Common myeloid progenitor, CD34-positive (primary cell): ENCODE measurements at regions of chr12 and their contacts with region 1.

Region 1: GRCh38 chr12:56189176-56189917 is at the start of gene SMARCC2:
- DNase-seq: peak; percentile 86 to 89 (median 87)
- H3K4me3 ChIP-seq: peak within 1 kb of the TSS; percentile 65 to 95 (median 88)
- H3K27ac ChIP-seq: peak within 1 kb of the TSS; percentile 66 to 87
- H3K4me1 ChIP-seq: peaks cover 8 to 36% (median 30%) of the 10 kb centered on the region in 4 experiments
- H3K27me3 ChIP-seq: no peaks in the 10 kb centered on the region

Region 2: DNA sequence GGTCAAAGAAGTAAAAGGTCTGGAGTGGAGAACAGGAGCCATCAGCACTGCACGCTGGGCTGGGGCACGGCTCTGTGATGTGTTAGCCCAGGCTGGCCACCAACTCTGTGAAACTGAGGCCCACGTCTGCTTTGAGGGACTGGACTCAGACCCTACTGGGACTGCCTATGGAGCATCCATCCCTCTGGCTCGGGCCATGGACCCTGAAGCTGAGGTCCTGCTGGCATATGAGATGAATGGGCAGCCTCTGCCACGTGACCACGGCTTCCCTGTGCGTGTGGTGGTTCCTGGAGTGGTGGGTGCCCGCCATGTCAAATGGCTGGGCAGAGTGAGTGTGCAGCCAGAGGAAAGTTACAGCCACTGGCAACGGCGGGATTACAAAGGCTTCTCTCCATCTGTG is 185.1 kb before region 1 on chr12:
- CTCF ChIA-PET with region 1: no interaction called
- POLR2A ChIA-PET with region 1: no interaction called
- DNase-seq: no peak
- H3K4me3 ChIP-seq: no peak overlapping the region
- H3K27ac ChIP-seq: no peak overlapping the region
- H3K4me1 ChIP-seq: peaks cover 5 to 27% (median 15%) of the 10 kb centered on the region in 4 experiments
- H3K27me3 ChIP-seq: no peaks in the 10 kb centered on the region

Region 3: GRCh38 chr12:56117778-56118687 is 71.3 kb before region 1 on chr12 and contains the start of gene ZC3H10:
- CTCF ChIA-PET with region 1: interaction called, 198 read pairs
- POLR2A ChIA-PET with region 1: interaction called, 13 read pairs
- DNase-seq: peak; percentile 99 to 100 (median 100)
- H3K4me3 ChIP-seq: peak within 1 kb of the TSS; percentile 74 to 100 (median 91)
- H3K27ac ChIP-seq: peak within 1 kb of the TSS; percentile 86 to 94
- H3K4me1 ChIP-seq: peaks cover 13 to 34% (median 23%) of the 10 kb centered on the region in 4 experiments
- H3K27me3 ChIP-seq: no peaks in the 10 kb centered on the region

Region 4: DNA sequence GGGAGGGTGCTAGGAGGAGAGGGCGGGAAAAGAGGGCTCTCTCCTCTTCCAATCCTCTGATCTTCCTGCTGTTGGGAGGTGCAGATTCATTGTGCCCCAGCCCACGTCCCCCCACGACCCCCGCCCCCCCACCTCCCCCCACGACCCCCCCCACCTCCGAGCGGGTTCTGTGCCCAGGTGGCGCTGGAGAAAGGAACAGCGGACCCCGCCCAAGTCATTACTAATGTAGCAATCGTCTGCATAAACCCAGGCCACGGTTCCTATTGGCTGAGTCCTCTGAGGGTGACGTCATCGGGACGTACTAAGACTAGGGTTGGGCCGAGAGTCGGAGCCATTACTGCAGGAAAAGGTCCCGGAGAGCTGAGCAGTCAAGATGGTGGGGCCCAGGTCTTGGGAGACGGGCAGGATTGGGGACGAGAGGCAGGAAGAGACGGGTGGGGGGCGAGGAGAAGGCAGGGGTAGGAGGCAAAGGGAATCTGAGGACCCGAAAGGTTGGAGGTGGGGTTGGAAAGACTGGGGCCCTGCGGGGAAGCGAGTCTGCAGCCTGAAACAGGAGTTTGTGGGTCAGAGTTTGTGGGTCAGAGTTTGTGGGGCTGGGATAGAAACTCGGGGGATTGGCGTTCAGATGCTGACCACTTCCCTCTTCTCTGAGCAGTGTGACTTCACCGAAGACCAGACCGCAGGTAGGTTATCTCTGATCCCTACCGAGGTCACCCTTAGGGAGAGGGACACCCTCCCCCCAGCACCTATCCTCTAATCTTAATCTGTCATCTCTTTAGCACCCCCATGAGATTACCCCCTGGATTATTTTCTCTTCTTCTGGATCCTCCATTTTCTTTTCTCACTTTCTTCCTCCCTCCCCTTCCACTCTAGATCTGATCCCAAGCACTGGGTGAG is 31.1 kb before region 1 on chr12 and contains the start of gene MYL6:
- CTCF ChIA-PET with region 1: interaction called, 13 read pairs
- POLR2A ChIA-PET with region 1: interaction called, 4 read pairs
- DNase-seq: peak; percentile 97 to 98 (median 98)
- H3K4me3 ChIP-seq: peak within 1 kb of the TSS; percentile 71 to 99 (median 97)
- H3K27ac ChIP-seq: peak within 1 kb of the TSS; percentile 94 to 98
- H3K4me1 ChIP-seq: peaks cover 10 to 42% (median 37%) of the 10 kb centered on the region in 4 experiments
- H3K27me3 ChIP-seq: no peaks in the 10 kb centered on the region

Region 5: GRCh38 chr12:56178347-56178746 is 11.0 kb before region 1 on chr12:
- CTCF ChIA-PET with region 1: interaction called, 16 read pairs
- POLR2A ChIA-PET with region 1: interaction called, 3 read pairs
- DNase-seq: no peak
- H3K4me3 ChIP-seq: no peak overlapping the region
- H3K27ac ChIP-seq: no peak overlapping the region
- H3K4me1 ChIP-seq: no peaks in the 10 kb centered on the region
- H3K27me3 ChIP-seq: no peaks in the 10 kb centered on the region

Region 6: GRCh38 chr12:56224102-56224701 is 34.9 kb after region 1 on chr12 and contains the start of gene NABP2:
- CTCF ChIA-PET with region 1: interaction called, 50 read pairs
- POLR2A ChIA-PET with region 1: interaction called, 6 read pairs
- DNase-seq: peak; percentile 96
- H3K4me3 ChIP-seq: peak within 1 kb of the TSS; percentile 37 to 89 (median 83)
- H3K27ac ChIP-seq: peak within 1 kb of the TSS in 1 of 2 experiments; percentile 83
- H3K4me1 ChIP-seq: peaks cover 9 to 49% (median 42%) of the 10 kb centered on the region in 4 experiments
- H3K27me3 ChIP-seq: no peaks in the 10 kb centered on the region

Region 7: DNA sequence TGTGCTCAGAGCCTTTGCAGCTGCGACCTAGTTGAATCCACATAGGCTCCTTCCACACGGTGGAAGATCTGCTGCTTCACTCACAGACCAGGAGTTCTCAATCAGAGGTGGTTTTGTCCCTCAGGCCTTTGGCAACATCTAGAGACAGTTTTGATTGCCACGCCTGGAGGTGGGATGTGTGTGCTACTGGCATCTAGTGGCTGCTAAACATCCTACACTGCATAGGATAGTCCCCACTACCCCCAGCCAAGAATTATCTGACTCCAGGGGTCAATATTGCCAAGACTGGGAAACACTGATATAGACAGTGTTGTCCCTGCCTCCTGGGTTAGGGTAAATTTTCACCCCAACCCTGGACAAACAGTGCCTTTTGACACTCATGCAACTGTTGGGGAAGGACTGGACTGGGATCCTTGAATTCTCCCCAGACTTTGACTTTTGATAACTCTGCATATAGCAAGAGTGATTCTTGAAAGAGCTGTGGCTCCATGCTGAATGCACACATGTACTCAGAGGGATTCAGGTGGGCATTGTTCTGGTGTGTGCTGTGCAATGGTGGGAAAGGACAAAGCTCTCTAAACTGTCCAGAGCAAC is 401.0 kb after region 1 on chr12:
- CTCF ChIA-PET with region 1: no interaction called
- POLR2A ChIA-PET with region 1: no interaction called
- DNase-seq: peak; percentile 41 to 59 (median 53)
- H3K4me3 ChIP-seq: no peak overlapping the region
- H3K27ac ChIP-seq: no peak overlapping the region
- H3K4me1 ChIP-seq: peaks cover 0 to 6% (median 0%) of the 10 kb centered on the region in 4 experiments
- H3K27me3 ChIP-seq: no peaks in the 10 kb centered on the region